H1 (cell line): ENCODE measurements at regions of chr7 and their contacts with region 1.

Region 1: DNA sequence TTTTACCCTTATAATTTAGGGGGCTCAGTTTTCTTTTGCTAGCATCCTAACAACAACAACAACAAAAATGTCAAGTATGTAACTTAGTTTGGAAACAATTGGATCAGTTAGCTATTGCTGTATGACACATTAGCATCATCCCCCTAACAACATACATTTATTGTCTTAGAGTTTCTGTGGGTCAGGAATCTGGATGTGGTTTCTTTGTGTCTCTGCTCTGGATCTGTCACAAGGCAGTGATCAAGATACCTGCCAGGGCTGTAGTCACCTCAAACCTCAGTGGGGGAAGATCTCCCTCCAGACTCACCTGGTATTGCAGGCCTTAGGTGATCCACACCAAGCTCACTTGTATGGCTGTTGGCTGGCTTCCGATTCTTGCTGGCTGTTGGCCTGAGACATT is 18.3 kb downstream of the CREB5 start:
- DNase-seq: peak in 1 of 2 experiments; percentile 26
- H3K4me3 ChIP-seq: no peak overlapping the region
- H3K27ac ChIP-seq: no peak overlapping the region
- H3K4me1 ChIP-seq: peaks cover 0 to 12% (median 3%) of the 10 kb centered on the region in 4 experiments; a peak in 2 of 7 replicates
- H3K27me3 ChIP-seq: no peaks in the 10 kb centered on the region; a peak in 1 of 7 replicates
- CTCF ChIP-seq: no peak
- EP300 ChIP-seq: no peak
- POLR2A ChIP-seq: no peak
- RAD21 ChIP-seq: no peak

Region 2: GRCh38 chr7:28411876-28412662 is 18.6 kb before region 1 on chr7 and contains the start of gene CREB5:
- CTCF ChIA-PET with region 1: interaction called, 10 read pairs
- POLR2A ChIA-PET with region 1: interaction called, 3 read pairs
- DNase-seq: no peak
- H3K4me3 ChIP-seq: no peak within 1 kb of the TSS
- H3K27ac ChIP-seq: no peak within 1 kb of the TSS
- H3K4me1 ChIP-seq: peaks cover 0 to 11% (median 3%) of the 10 kb centered on the region in 4 experiments; a peak in 3 of 7 replicates
- H3K27me3 ChIP-seq: peaks cover 19 to 52% (median 42%) of the 10 kb centered on the region in 4 experiments
- CTCF ChIP-seq: peak in 2 of 3 experiments; percentile 41 to 61; a peak in 2 of 4 replicates
- EP300 ChIP-seq: no peak
- POLR2A ChIP-seq: no peak
- RAD21 ChIP-seq: peak; percentile 58 to 68
- total RNA-seq, gene CREB5: 2.6 and 2.7 TPM in 2 replicates